PC-3 (cell line): ENCODE measurements at regions of chr3 and their contacts with region 1.

Region 1: GRCh38 chr3:56251343-56251945 is 216.8 kb downstream of the ERC2 start:
- DNase-seq: peak; percentile 76
- ATAC-seq: peak; percentile 83
- H3K4me3 ChIP-seq: no peak overlapping the region
- H3K27ac ChIP-seq: no peak overlapping the region
- H3K4me1 ChIP-seq: no peaks in the 10 kb centered on the region
- H3K27me3 ChIP-seq: peaks cover 8% of the 10 kb centered on the region; the same call in 1 of the 2 replicates
- CTCF ChIP-seq: peak; percentile 87

Region 2: GRCh38 chr3:54830658-54831057 is 1420.8 kb before region 1 on chr3:
- CTCF ChIA-PET with region 1: interaction called, 12 read pairs
- POLR2A ChIA-PET with region 1: no interaction called
- intact Hi-C with region 1: no loop called
- DNase-seq: peak; percentile 75
- ATAC-seq: peak; percentile 55
- H3K4me3 ChIP-seq: no peak overlapping the region
- H3K27ac ChIP-seq: no peak overlapping the region
- H3K4me1 ChIP-seq: no peaks in the 10 kb centered on the region
- H3K27me3 ChIP-seq: no peaks in the 10 kb centered on the region
- CTCF ChIP-seq: peak; percentile 75

Region 3: DNA sequence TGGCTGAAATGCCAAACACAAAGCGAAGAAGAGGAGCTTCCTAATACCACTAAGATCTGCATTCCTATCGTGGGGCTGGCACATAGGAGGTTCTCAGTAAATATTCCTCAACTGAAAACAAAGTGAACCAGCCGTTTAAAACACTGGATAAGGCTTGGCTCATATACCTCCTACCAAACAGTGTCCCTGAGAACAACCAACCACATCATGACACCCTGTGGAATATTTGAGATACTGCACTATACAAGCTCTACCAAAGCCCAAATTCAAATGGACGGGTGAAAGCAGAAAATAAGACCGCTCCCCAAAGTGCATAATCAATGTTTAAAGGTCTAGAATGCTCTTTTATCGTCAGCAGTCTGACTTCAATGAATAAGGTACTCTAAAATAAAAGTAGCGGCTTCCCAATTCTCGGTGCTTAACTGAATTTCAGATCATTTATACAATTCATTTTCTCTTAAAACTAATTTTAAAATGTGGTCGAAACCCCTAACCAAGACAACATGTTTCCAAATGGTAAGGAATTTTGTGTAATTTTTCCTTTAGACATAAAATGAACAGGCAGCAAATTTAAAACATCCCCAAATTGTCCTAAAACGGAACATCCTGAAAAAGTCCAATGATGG is 209.0 kb before region 1 on chr3:
- CTCF ChIA-PET with region 1: no interaction called
- POLR2A ChIA-PET with region 1: no interaction called
- intact Hi-C with region 1: loop called (anchors 1 kb)
- DNase-seq: peak; percentile 66
- ATAC-seq: peak; percentile 98
- H3K4me3 ChIP-seq: no peak overlapping the region
- H3K27ac ChIP-seq: no peak overlapping the region
- H3K4me1 ChIP-seq: no peaks in the 10 kb centered on the region
- H3K27me3 ChIP-seq: peaks cover 49% of the 10 kb centered on the region
- CTCF ChIP-seq: peak; percentile 73

Region 4: GRCh38 chr3:56059731-56060130 is 191.7 kb before region 1 on chr3:
- CTCF ChIA-PET with region 1: no interaction called
- POLR2A ChIA-PET with region 1: no interaction called
- intact Hi-C with region 1: loop called (anchors 5 kb)
- DNase-seq: peak; percentile 32
- ATAC-seq: peak; percentile 43
- H3K4me3 ChIP-seq: no peak overlapping the region
- H3K27ac ChIP-seq: no peak overlapping the region
- H3K4me1 ChIP-seq: peaks cover 7% of the 10 kb centered on the region; the same call in 1 of the 2 replicates
- H3K27me3 ChIP-seq: peaks cover 6% of the 10 kb centered on the region; the same call in 1 of the 2 replicates
- CTCF ChIP-seq: no peak

Region 5: DNA sequence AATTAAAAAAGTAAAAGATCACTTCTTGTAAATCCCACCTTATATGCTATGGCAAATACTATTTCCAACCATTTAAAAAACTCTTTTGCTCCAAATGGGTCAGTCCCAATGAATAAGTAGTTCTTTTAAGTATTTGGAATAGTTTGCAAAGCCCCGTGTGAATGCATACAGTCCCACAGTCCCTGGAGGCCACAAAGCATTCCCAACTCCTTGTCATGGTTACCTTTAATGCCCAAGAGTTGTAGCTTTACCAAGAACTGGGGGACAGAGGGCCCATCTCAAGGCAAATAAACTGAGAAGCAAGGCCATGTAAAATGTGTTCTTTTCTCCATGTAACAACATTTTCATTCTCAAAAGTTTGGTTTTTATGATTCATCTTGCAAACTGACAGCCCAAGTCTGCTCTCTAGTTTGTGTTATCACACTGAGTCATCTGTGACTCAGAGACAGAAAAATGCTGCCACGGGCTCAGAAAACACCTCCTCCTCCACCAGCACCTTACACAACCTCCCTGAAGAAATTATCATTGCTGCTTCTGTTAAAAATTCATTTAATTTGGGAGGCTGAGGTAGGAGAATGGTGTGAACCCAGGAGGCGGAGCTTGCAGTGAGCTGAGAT is 119.4 kb before region 1 on chr3:
- CTCF ChIA-PET with region 1: no interaction called
- POLR2A ChIA-PET with region 1: no interaction called
- intact Hi-C with region 1: loop called (anchors 5 kb)
- DNase-seq: peak; percentile 96
- ATAC-seq: peak; percentile 97
- H3K4me3 ChIP-seq: no peak overlapping the region
- H3K27ac ChIP-seq: peak overlapping the region; percentile 39
- H3K4me1 ChIP-seq: peaks cover 41% of the 10 kb centered on the region
- H3K27me3 ChIP-seq: no peaks in the 10 kb centered on the region
- CTCF ChIP-seq: no peak

Region 6: GRCh38 chr3:56154297-56154696 is 97.1 kb before region 1 on chr3:
- CTCF ChIA-PET with region 1: no interaction called
- POLR2A ChIA-PET with region 1: no interaction called
- intact Hi-C with region 1: no loop called
- DNase-seq: peak; percentile 30
- ATAC-seq: peak; percentile 73
- H3K4me3 ChIP-seq: no peak overlapping the region
- H3K27ac ChIP-seq: no peak overlapping the region
- H3K4me1 ChIP-seq: no peaks in the 10 kb centered on the region
- H3K27me3 ChIP-seq: no peaks in the 10 kb centered on the region
- CTCF ChIP-seq: no peak

Region 7: GRCh38 chr3:56207922-56208321 is 43.5 kb before region 1 on chr3:
- CTCF ChIA-PET with region 1: no interaction called
- POLR2A ChIA-PET with region 1: no interaction called
- intact Hi-C with region 1: no loop called
- DNase-seq: no peak
- ATAC-seq: no peak
- H3K4me3 ChIP-seq: no peak overlapping the region
- H3K27ac ChIP-seq: no peak overlapping the region
- H3K4me1 ChIP-seq: no peaks in the 10 kb centered on the region
- H3K27me3 ChIP-seq: no peaks in the 10 kb centered on the region
- CTCF ChIP-seq: no peak